ENCODE measurements at regions of chr7 and their contacts with region 1.

Region 1: DNA sequence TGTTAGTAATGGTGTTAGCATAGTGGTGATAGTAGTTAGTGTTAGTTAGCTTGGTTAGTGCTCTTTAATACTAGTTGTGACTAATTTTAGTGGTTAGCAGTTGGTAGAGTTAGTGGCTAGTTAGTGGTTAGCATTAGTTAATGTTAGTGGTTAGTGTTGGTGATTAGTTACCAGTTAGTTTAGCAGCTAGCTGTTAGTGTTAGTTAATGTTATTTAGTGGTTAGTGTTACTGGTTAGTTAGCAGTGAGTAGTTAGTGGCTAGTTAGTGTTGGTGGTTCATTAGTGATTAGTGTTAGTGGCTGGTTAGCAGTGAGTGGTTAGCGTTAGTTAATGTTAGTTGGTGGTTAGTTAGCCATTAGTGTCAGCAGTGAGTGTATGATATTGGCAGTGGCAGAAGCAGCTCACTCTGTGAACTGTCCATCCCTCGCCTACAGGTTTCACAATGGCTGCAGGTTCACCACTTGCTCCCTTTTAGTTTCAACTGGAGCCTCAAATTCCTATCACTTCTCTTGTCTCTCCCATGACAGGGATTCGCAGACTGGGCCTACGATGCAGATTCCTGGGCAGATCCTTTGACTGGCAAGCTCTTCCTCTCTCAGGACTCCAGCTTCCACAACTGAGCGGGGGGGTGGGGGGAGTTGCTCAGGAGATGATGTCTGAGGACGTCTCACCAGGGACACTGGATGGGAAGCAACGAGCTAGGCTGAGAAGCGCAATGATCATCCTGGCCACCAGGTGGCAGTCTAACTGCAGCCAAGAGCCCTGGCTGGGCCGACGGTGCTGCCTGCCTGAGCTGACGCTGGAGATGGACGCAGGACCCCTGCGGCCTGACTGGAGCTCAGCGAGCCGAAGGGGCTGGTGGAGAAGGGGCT is 19.5 kb downstream of the GHRHR start:
- DNase-seq: peak; percentile 67 to 81
- H3K4me3 ChIP-seq: no peak overlapping the region
- H3K27ac ChIP-seq: no peak overlapping the region
- H3K4me1 ChIP-seq: peaks cover 3% of the 10 kb centered on the region
- H3K27me3 ChIP-seq: peaks cover 38% of the 10 kb centered on the region
- CTCF ChIP-seq: peak; percentile 98

Region 2: DNA sequence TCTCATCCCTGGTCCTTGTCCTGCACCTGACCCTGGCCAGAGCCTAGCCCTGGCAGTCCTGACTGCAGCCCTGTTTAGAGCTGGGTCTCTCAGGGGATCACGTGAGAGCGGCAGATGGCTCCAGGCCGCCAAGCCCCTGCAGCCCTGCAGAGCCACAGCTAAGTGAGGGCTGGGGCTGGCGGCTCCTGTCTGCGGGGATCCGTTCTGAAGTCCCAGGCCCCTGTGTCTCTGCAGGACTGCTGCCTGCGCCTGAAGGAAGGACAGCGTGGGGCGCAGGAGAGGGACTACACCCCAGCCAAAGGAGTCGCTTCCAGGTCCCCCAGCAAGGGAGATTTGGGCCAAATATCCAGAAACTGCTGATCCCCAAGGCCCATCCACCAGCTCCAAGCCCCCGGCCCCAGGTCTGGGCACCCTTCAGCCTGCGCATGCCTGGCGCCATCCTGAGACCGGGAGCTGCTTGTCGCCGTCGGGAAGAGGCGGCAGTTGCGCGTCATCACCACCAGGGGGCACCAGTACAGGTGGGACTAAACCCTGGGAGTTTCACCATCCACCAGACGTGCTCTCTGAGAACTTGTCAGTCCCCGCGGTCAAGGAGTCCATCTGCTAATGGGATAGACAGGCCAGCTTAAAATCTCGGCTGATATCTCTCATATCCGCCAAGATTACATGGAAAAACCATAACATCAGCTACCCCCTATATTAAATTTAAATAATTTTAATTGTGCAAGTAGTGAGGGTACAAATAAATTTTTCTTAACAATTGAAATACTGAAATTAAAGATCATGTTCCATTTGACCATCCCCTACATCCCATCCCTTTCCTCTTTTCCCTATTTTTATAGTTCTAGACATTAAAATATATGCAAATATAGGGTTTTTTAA is 44.6 kb before region 1 on chr7:
- CTCF ChIA-PET with region 1: interaction called, 11 read pairs
- POLR2A ChIA-PET with region 1: no interaction called
- intact Hi-C with region 1: loop called (anchors 1 kb)
- DNase-seq: peak; percentile 60 to 88
- H3K4me3 ChIP-seq: no peak overlapping the region
- H3K27ac ChIP-seq: no peak overlapping the region
- H3K4me1 ChIP-seq: peaks cover 19% of the 10 kb centered on the region
- H3K27me3 ChIP-seq: peaks cover 9% of the 10 kb centered on the region; the same call in 1 of the 2 replicates
- CTCF ChIP-seq: peak; percentile 99

Region 3: GRCh38 chr7:31122649-31123058 is 139.4 kb after region 1 on chr7:
- CTCF ChIA-PET with region 1: interaction called, 81 read pairs
- POLR2A ChIA-PET with region 1: no interaction called
- intact Hi-C with region 1: loop called (anchors 1 kb)
- DNase-seq: peak; percentile 61 to 69
- H3K4me3 ChIP-seq: no peak overlapping the region
- H3K27ac ChIP-seq: no peak overlapping the region
- H3K4me1 ChIP-seq: no peaks in the 10 kb centered on the region
- H3K27me3 ChIP-seq: peaks cover 65% of the 10 kb centered on the region
- CTCF ChIP-seq: peak; percentile 86

Region 4: DNA sequence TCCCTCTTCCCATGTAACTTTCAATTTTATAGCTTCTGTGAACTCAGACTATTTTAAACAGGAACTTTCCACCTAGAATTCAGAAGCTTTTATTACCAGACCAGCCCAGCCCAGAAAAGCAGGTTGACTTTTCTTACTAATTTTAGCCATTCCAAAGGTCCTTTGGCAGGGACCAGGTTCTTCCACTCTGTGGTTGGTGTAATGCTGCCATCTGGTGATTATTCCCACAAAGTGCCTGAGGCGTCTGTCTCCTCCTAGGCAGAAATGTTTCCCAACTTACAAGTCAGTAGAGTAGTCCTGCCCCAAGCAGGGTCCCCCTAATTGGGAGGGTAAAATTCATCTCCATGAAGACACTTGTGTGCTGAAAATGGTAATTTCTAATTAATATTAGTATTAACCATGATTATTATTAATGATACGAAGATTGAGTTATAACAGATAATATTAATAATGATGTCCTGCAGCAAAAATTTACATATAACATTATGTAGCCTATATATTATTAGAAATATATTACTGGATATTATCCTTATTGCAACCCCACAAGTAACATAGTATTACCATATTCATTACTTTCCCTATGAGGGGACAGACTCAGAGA is 650.7 kb after region 1 on chr7:
- CTCF ChIA-PET with region 1: no interaction called
- POLR2A ChIA-PET with region 1: no interaction called
- intact Hi-C with region 1: loop called (anchors 5 kb)
- DNase-seq: peak; percentile 50 to 53
- H3K4me3 ChIP-seq: no peak overlapping the region
- H3K27ac ChIP-seq: no peak overlapping the region
- H3K4me1 ChIP-seq: no peaks in the 10 kb centered on the region
- H3K27me3 ChIP-seq: peaks cover 23% of the 10 kb centered on the region
- CTCF ChIP-seq: peak; percentile 74

Measured in PC-9 (cell line).